Posterior vena cava (tissue), 2 donors: ENCODE measurements at regions of chr3 and their contacts with region 1.

Region 1: DNA sequence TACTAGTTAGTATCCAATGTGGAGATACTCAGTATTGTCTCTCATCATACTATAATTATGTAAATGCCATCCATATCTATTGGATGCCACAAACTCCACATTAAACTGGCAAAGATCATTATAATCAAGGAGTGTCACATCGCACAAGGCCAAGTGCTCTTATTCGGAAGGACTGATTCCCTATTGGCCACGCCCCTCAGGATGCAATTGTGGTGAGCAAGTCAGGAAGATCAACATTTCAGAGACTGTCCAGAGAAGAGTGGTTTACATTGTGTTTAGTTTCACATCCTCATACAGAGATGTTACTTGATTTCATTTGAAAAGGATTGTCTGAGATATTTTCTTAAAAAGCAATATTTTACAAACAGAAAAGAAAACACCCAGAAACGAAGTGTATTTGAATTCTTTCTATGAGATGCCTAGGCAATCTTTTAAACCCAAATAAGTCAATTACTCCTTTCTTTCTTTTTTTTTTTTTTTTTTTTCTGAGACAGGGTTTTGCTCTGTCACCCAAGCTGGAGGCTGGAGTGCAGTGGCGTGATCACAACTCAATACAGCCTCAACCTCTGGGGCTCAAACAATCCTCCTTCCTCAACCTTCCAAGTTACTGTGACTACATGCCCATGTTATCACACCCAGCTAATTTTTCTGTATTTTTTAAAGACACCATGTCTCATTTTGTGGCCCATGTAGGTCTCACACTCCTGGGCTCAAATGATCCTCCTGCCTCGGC is 369.1 kb downstream of the RBMS3 start:
- DNase-seq: no peak

Region 2: DNA sequence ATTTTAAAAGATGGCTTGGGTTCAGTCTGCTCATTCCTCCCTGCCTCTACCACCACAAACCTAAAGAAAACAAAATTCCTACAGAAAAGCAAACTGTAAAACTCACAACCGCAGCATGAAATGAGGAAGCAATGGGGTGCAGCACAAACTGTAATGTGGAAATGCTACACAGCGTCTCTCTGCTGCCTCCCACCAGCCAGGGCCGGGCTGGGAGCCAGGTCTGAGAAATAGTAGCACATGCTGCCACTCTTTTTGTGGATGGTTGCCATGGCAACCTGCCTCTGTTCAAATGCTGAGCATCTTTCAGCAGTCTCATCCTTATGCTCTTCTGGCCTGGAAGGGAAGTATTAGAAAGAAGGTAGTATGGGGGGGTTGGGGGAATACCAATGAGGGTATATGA is 1983.3 kb before region 1 on chr3:
- intact Hi-C with region 1: no loop called
- DNase-seq: peak; percentile 94

Region 3: DNA sequence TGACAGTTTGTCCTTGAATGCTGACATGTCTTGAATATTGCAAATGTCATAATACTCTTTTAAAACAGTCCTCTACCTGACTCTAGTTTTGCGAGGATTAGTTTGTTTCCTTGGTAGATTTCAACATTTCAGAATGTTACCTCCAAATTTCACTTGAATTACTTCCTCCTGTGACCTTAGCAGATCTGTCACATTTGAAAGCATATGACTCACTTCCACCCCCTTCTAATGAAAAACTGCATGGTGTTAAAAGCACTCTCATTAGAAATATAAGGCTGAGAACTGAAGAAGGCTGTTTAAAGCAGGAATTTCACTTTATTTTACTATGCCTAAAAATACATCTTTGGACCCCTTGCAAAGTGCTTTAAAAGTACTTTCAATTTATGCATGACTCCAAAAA is 357.7 kb after region 1 on chr3:
- intact Hi-C with region 1: loop called in 1 of 2 experiments (anchors 10 kb)
- DNase-seq: no peak